ENCODE measurements at regions of chr20 and their contacts with region 1.

Region 1: DNA sequence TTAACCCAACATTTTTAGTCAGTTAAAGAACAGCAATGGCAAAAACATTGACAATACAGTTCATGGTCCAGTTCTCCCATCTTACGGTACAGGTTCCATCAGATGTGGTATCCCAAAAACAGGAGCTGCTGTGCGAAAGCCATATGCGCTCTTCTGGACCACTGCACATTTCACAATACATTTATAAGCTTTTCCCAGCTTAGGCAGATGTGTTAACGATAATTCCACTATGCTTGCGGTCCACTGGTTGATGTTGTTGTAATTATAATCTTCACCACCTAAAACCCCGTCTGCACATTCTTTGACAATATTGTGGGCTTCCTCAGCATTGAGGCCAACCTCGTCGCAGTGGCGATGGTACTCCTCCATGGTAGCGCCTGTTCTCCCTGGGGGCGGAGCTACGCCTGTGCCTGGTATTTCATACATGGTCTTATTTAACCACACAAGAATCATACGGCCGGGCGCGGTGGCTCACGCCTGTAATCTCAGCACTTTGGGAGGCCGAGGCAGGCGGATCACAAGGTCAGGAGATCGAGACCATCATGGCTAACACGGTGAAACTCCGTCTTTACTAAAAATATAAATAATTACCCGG is 52.0 kb downstream of the BFSP1 start:
- DNase-seq: no peak
- ATAC-seq: no peak
- H3K4me3 ChIP-seq: no peak overlapping the region
- H3K4me3 Mint-ChIP-seq: no peak overlapping the region
- H3K27ac ChIP-seq: no peak overlapping the region
- H3K27ac Mint-ChIP-seq: no peak overlapping the region
- H3K4me1 ChIP-seq: no peaks in the 10 kb centered on the region
- H3K4me1 Mint-ChIP-seq: no peaks in the 10 kb centered on the region
- H3K27me3 ChIP-seq: peaks cover 5 to 8% of the 10 kb centered on the region in 2 experiments
- H3K27me3 Mint-ChIP-seq: peaks cover 9 to 11% of the 10 kb centered on the region in 2 donors

Region 2: GRCh38 chr20:17460119-17460518 is 19.0 kb before region 1 on chr20:
- CTCF ChIA-PET with region 1: no interaction called
- POLR2A ChIA-PET with region 1: no interaction called
- DNase-seq: peak in 1 of 35 experiments; percentile 10
- ATAC-seq: no peak
- H3K4me3 ChIP-seq: no peak overlapping the region
- H3K4me3 Mint-ChIP-seq: no peak overlapping the region
- H3K27ac ChIP-seq: no peak overlapping the region
- H3K27ac Mint-ChIP-seq: no peak overlapping the region
- H3K4me1 ChIP-seq: no peaks in the 10 kb centered on the region
- H3K4me1 Mint-ChIP-seq: peaks cover 4 to 7% (median 6%) of the 10 kb centered on the region in 3 donors
- H3K27me3 ChIP-seq: peaks cover 2 to 4% of the 10 kb centered on the region in 2 experiments
- H3K27me3 Mint-ChIP-seq: peaks cover 12 to 21% of the 10 kb centered on the region in 2 donors

Region 3: GRCh38 chr20:17497821-17498580 is 18.8 kb after region 1 on chr20:
- CTCF ChIA-PET with region 1: no interaction called
- POLR2A ChIA-PET with region 1: no interaction called
- DNase-seq: no peak
- ATAC-seq: no peak
- H3K4me3 ChIP-seq: no peak overlapping the region
- H3K4me3 Mint-ChIP-seq: no peak overlapping the region
- H3K27ac ChIP-seq: no peak overlapping the region
- H3K27ac Mint-ChIP-seq: no peak overlapping the region
- H3K4me1 ChIP-seq: no peaks in the 10 kb centered on the region
- H3K4me1 Mint-ChIP-seq: no peaks in the 10 kb centered on the region
- H3K27me3 ChIP-seq: peaks cover 0 to 8% of the 10 kb centered on the region in 2 experiments
- H3K27me3 Mint-ChIP-seq: no peaks in the 10 kb centered on the region

Region 4: GRCh38 chr20:17626217-17627007 is 147.3 kb after region 1 on chr20:
- CTCF ChIA-PET with region 1: interaction called in 1 of 2 experiments, 11 read pairs
- POLR2A ChIA-PET with region 1: no interaction called
- DNase-seq: no peak
- ATAC-seq: no peak
- H3K4me3 ChIP-seq: no peak overlapping the region
- H3K4me3 Mint-ChIP-seq: no peak overlapping the region
- H3K27ac ChIP-seq: no peak overlapping the region
- H3K27ac Mint-ChIP-seq: no peak overlapping the region
- H3K4me1 ChIP-seq: no peaks in the 10 kb centered on the region
- H3K4me1 Mint-ChIP-seq: no peaks in the 10 kb centered on the region
- H3K27me3 ChIP-seq: no peaks in the 10 kb centered on the region
- H3K27me3 Mint-ChIP-seq: no peaks in the 10 kb centered on the region